B cell (primary cell): ENCODE measurements at regions of chr19 and their contacts with region 1.

Region 1: GRCh38 chr19:47152224-47153017 is 21.8 kb downstream of the SAE1 start:
- DNase-seq: no peak
- ATAC-seq: no peak
- H3K4me3 ChIP-seq: no peak overlapping the region
- H3K4me3 Mint-ChIP-seq: no peak overlapping the region
- H3K27ac ChIP-seq: no peak overlapping the region
- H3K27ac Mint-ChIP-seq: no peak overlapping the region
- H3K4me1 ChIP-seq: peaks cover 11 to 16% of the 10 kb centered on the region in 2 donors
- H3K4me1 Mint-ChIP-seq: peaks cover 13% of the 10 kb centered on the region
- H3K27me3 ChIP-seq: no peaks in the 10 kb centered on the region
- H3K27me3 Mint-ChIP-seq: no peaks in the 10 kb centered on the region
- CTCF ChIP-seq: no peak

Region 2: GRCh38 chr19:47179653-47180310 is 27.4 kb after region 1 on chr19:
- CTCF ChIA-PET with region 1: interaction called, 4 read pairs
- POLR2A ChIA-PET with region 1: interaction called, 11 read pairs
- intact Hi-C with region 1: no loop called
- DNase-seq: no peak
- ATAC-seq: no peak
- H3K4me3 ChIP-seq: no peak overlapping the region
- H3K4me3 Mint-ChIP-seq: no peak overlapping the region
- H3K27ac ChIP-seq: no peak overlapping the region
- H3K27ac Mint-ChIP-seq: no peak overlapping the region
- H3K4me1 ChIP-seq: peaks cover 0 to 3% of the 10 kb centered on the region in 2 donors
- H3K4me1 Mint-ChIP-seq: peaks cover 10% of the 10 kb centered on the region
- H3K27me3 ChIP-seq: no peaks in the 10 kb centered on the region
- H3K27me3 Mint-ChIP-seq: no peaks in the 10 kb centered on the region
- CTCF ChIP-seq: no peak

Region 3: GRCh38 chr19:47305309-47305751 is 152.9 kb after region 1 on chr19:
- CTCF ChIA-PET with region 1: interaction called, 7 read pairs
- POLR2A ChIA-PET with region 1: no interaction called
- intact Hi-C with region 1: loop called (anchors 1 kb)
- DNase-seq: peak; percentile 71
- ATAC-seq: peak; percentile 56
- H3K4me3 ChIP-seq: no peak overlapping the region
- H3K4me3 Mint-ChIP-seq: peak overlapping the region; percentile 12
- H3K27ac ChIP-seq: no peak overlapping the region
- H3K27ac Mint-ChIP-seq: no peak overlapping the region
- H3K4me1 ChIP-seq: peaks cover 11% of the 10 kb centered on the region in 2 donors
- H3K4me1 Mint-ChIP-seq: peaks cover 15% of the 10 kb centered on the region
- H3K27me3 ChIP-seq: peaks cover 0 to 21% (median 2%) of the 10 kb centered on the region in 4 experiments
- H3K27me3 Mint-ChIP-seq: peaks cover 18% of the 10 kb centered on the region
- CTCF ChIP-seq: peak; percentile 87